Sigmoid colon (tissue), 7 donors: ENCODE measurements at regions of chr9 and their contacts with region 1.

Region 1: GRCh38 chr9:20544953-20545622 is 77.2 kb downstream of the MLLT3 start:
- DNase-seq: no peak
- H3K4me3 ChIP-seq: no peak overlapping the region
- H3K27ac ChIP-seq: no peak overlapping the region
- H3K4me1 ChIP-seq: peaks cover 0 to 17% (median 6%) of the 10 kb centered on the region in 4 donors
- H3K27me3 ChIP-seq: no peaks in the 10 kb centered on the region
- CTCF ChIP-seq: no peak
- EP300 ChIP-seq: no peak
- POLR2A ChIP-seq: no peak

Region 2: DNA sequence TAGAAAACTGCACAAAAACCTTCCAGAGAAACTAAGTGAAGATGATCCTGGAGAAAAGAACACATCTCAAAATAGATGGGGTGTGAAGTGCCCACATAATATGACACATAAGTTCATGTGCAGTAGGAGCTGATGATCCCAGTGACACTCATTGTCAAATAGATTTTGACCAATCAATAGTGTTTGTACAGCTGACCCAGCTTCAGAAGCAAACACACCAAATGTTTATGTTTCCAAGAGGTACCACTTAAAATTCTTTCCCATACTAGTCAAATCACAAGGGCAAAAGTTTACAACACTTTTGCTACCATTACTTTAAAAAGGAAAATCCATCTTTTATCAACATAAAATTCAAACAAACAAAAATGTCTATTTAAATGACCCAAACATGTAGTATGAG is 97.8 kb before region 1 on chr9:
- intact Hi-C with region 1: no loop called
- DNase-seq: no peak
- H3K4me3 ChIP-seq: no peak overlapping the region
- H3K27ac ChIP-seq: no peak overlapping the region
- H3K4me1 ChIP-seq: peaks cover 0 to 13% (median 10%) of the 10 kb centered on the region in 4 donors
- H3K27me3 ChIP-seq: no peaks in the 10 kb centered on the region
- CTCF ChIP-seq: no peak
- EP300 ChIP-seq: no peak
- POLR2A ChIP-seq: no peak

Region 3: DNA sequence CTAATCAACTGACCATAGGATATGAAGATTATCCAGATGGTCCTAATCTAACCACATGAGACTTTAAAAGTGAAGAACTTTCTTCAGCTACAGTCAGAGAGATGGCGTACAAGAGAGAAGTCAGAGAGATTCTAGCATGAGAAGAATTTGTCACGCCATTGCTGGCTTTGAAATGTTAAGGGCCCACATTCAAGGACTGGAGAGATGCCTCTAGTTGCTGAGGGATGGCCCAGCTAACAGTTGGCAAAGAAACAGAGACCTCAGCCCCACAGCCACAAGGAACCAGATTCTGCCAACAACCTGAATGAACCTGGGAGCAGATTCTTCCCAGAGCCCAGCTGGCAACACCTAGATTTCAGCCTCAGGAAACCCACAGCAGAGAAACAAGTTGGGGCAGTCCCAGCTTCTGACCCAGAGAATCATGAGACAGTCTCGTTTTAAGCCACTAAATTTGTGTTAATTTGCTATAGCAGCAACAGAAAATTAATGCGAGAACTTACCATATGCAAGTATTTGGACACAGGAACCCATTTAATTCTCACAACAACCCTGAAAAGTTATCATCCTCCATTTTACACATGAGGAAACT is 54.7 kb before region 1 on chr9:
- intact Hi-C with region 1: loop called (anchors 5 kb)
- DNase-seq: no peak
- H3K4me3 ChIP-seq: no peak overlapping the region
- H3K27ac ChIP-seq: no peak overlapping the region
- H3K4me1 ChIP-seq: peaks cover 0 to 26% (median 16%) of the 10 kb centered on the region in 4 donors
- H3K27me3 ChIP-seq: no peaks in the 10 kb centered on the region
- CTCF ChIP-seq: no peak
- EP300 ChIP-seq: no peak
- POLR2A ChIP-seq: no peak